OCI-LY7 (cell line): ENCODE measurements at regions of chr2 and their contacts with region 1.

Region 1: DNA sequence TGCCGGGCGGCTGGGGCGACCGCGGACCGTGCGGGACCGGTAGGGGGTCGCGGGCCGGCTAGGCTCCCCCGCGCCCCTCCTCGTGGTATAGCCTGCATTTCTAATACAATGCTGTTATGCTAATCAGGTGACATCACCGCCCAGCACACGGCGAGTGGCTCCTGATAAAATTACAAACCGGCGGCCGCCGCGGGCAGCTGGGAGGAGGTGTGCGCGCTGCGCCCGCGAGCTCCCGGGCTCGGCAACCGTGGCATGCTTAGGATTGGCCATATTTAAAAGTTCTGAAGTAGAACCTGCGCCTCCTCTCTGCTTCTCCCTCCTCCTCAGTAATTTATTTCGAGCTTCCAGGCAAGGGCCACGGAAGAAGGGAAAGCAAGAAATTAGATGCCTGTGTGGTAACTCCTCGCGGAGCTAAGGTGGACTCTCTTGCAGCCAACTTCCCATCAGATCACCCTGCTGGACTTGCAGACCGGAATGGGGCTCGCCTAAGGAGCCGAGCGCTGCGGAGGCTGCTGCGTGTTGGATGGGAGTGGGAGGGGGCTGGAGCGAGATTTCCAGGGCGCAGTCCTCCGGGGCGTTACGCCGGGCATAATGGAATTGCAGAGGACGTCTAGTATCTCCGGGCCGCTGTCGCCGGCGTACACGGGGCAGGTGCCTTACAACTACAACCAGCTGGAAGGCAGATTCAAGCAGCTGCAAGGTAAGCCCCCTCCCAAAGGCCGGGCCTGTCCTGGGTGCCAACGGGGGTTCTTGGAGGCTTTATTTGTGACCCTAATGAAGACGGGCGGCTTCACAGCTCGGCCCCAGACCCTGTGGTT is 102.3 kb downstream of the SPTBN1 start:
- DNase-seq: peak; percentile 89
- H3K4me3 ChIP-seq: peak overlapping the region; percentile 85
- H3K27ac ChIP-seq: peak overlapping the region; percentile 79
- H3K4me1 ChIP-seq: peaks cover 43% of the 10 kb centered on the region
- CTCF ChIP-seq: no peak

Region 2: GRCh38 chr2:53217250-53217649 is 1341.1 kb before region 1 on chr2:
- CTCF ChIA-PET with region 1: no interaction called
- POLR2A ChIA-PET with region 1: no interaction called
- intact Hi-C with region 1: no loop called
- DNase-seq: no peak
- H3K4me3 ChIP-seq: no peak overlapping the region
- H3K27ac ChIP-seq: no peak overlapping the region
- H3K4me1 ChIP-seq: no peaks in the 10 kb centered on the region
- CTCF ChIP-seq: no peak

Region 3: GRCh38 chr2:54444503-54444902 is 113.9 kb before region 1 on chr2:
- CTCF ChIA-PET with region 1: no interaction called
- POLR2A ChIA-PET with region 1: no interaction called
- intact Hi-C with region 1: no loop called
- DNase-seq: no peak
- H3K4me3 ChIP-seq: no peak overlapping the region
- H3K27ac ChIP-seq: no peak overlapping the region
- H3K4me1 ChIP-seq: no peaks in the 10 kb centered on the region
- CTCF ChIP-seq: no peak

Region 4: DNA sequence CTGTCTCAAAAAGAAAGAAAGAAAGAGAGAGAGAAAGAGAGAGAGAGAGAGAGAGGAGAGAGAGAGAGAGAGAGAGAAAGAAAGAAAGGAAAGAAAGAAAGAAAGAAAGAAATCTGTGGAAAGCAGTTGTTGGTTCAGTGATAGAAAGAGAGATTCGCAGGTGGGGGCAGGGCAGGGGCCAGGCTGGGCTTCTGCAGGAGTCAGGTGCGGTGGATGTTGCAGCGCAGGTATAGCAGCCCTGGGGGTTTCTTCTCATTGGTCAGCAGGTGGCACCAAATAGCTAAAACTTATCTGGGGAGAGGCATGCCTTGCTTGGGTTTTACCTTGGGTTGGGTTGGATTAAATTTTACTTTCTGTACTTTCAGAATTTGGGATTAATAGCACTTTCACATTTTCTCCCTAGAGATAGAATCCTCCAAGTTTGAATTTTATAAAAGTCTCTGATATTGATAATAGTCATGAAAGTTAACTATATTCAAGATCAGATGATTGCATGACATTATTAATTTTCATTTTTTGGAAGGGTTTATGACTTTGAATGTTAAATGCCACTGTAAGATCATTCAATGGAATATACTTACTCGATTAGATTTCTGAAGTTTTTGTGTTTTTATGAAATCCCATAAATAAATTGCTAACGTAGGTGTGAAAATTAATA is 35.6 kb before region 1 on chr2:
- CTCF ChIA-PET with region 1: no interaction called
- POLR2A ChIA-PET with region 1: no interaction called
- intact Hi-C with region 1: loop called (anchors 2 kb)
- DNase-seq: peak; percentile 89
- H3K4me3 ChIP-seq: no peak overlapping the region
- H3K27ac ChIP-seq: no peak overlapping the region
- H3K4me1 ChIP-seq: peaks cover 15% of the 10 kb centered on the region
- CTCF ChIP-seq: peak; percentile 93

Region 5: GRCh38 chr2:54570925-54571694 is 12.7 kb after region 1 on chr2:
- CTCF ChIA-PET with region 1: no interaction called
- POLR2A ChIA-PET with region 1: interaction called, 56 read pairs
- intact Hi-C with region 1: loop called (anchors 1 kb)
- DNase-seq: peak; percentile 84
- H3K4me3 ChIP-seq: peak overlapping the region; percentile 51
- H3K27ac ChIP-seq: peak overlapping the region; percentile 87
- H3K4me1 ChIP-seq: peaks cover 92% of the 10 kb centered on the region
- CTCF ChIP-seq: no peak

Region 6: GRCh38 chr2:54579684-54580620 is 21.6 kb after region 1 on chr2:
- CTCF ChIA-PET with region 1: interaction called, 3 read pairs
- POLR2A ChIA-PET with region 1: interaction called, 52 read pairs
- intact Hi-C with region 1: loop called (anchors 1 kb)
- DNase-seq: peak; percentile 68
- H3K4me3 ChIP-seq: peak overlapping the region; percentile 62
- H3K27ac ChIP-seq: peak overlapping the region; percentile 83
- H3K4me1 ChIP-seq: peaks cover 95% of the 10 kb centered on the region
- CTCF ChIP-seq: no peak

Region 7: DNA sequence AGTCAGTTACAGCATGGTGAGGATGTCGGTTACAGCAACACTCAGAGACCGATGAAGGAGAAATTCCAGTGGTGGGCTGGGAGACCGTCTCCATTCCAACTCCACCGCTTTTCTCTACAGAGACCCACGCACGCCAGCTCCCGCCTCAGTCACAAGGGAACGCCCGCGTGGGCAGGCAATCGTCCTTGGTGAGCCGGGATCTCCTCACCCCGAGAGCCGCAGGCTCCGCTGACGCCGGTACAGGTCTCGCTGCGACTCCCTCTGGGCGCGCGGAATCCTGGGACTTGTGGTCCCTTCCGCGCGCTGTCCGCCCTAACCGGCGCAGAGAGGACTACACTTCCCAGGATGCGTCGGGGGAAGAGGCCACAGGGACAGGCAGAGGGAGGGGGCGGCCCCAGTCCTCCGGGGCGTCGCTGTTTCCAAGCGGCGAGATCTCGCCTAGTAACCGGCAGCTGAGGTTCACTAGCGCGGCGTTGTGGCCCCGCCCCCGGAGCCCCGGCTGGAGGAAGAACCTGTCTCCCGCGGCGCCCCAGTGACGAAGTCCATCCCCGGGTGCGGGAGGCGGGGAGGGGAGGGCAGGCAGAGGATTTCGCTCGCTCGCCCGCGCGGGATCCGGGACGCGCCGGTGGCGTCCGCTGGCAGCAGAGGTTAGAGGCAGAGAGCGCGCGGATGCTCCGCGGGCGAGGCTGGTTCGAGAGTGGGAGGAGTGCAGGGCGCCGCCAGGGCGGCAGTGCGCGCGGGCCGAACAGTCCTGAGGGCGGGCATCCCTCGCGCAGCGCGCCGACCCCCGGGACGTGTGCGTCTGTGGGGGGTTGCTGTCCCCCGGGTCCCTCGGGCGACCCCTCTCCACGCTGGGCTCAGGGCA is 165.0 kb after region 1 on chr2 and contains the start of gene EML6:
- CTCF ChIA-PET with region 1: no interaction called
- POLR2A ChIA-PET with region 1: interaction called, 3 read pairs
- intact Hi-C with region 1: loop called (anchors 1 kb)
- DNase-seq: peak; percentile 99
- H3K4me3 ChIP-seq: peak within 1 kb of the TSS; percentile 79
- H3K27ac ChIP-seq: peak within 1 kb of the TSS; percentile 69
- H3K4me1 ChIP-seq: peaks cover 42% of the 10 kb centered on the region
- CTCF ChIP-seq: peak; percentile 65
- total RNA-seq, gene EML6: 298 and 367 TPM in 2 replicates

Region 8: DNA sequence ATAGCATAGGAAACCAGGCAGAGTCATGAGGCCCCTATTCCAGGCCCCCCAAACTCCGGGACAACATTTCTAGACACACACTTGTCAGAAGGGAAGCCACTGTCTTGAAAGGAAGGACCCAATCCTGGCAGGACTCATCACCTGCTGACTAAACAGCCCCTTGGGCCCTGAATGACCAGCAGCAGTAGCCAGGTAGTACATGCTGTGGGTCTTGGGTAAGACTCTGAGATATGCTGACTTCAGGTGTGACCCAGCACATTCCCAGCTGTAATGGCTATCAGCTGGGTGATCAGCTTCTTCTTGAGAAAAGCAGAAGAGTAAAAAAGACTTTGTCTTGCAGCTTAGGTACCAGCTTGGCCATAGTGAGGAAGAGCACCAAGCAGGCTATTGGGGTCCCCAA is 638.1 kb after region 1 on chr2:
- CTCF ChIA-PET with region 1: no interaction called
- POLR2A ChIA-PET with region 1: no interaction called
- intact Hi-C with region 1: no loop called
- DNase-seq: no peak
- H3K4me3 ChIP-seq: no peak overlapping the region
- H3K27ac ChIP-seq: no peak overlapping the region
- H3K4me1 ChIP-seq: no peaks in the 10 kb centered on the region
- CTCF ChIP-seq: no peak